ENCODE measurements at regions of chr17 and their contacts with region 1.

Region 1: GRCh38 chr17:45148183-45149036 is at the start of gene HEXIM1:
- DNase-seq: peak; percentile 99
- H3K4me3 Mint-ChIP-seq: peak within 1 kb of the TSS; percentile 96
- H3K27ac Mint-ChIP-seq: peak within 1 kb of the TSS; percentile 98
- H3K4me1 Mint-ChIP-seq: peaks cover 26% of the 10 kb centered on the region
- H3K27me3 Mint-ChIP-seq: no peaks in the 10 kb centered on the region
- total RNA-seq, gene HEXIM1: 65.9 and 67.9 TPM in 2 replicates

Region 2: GRCh38 chr17:44689477-44690217 is 458.8 kb before region 1 on chr17 and contains the start of gene CCDC43:
- intact Hi-C with region 1: loop called (anchors 1 kb)
- DNase-seq: peak; percentile 91
- H3K4me3 Mint-ChIP-seq: peak within 1 kb of the TSS; percentile 99
- H3K27ac Mint-ChIP-seq: peak within 1 kb of the TSS; percentile 89
- H3K4me1 Mint-ChIP-seq: peaks cover 32% of the 10 kb centered on the region
- H3K27me3 Mint-ChIP-seq: no peaks in the 10 kb centered on the region
- total RNA-seq, gene CCDC43: 42.6 and 44.6 TPM in 2 replicates

Region 3: GRCh38 chr17:45161019-45161825 is 12.8 kb after region 1 on chr17:
- intact Hi-C with region 1: loop called (anchors 1 kb)
- DNase-seq: peak; percentile 98
- H3K4me3 Mint-ChIP-seq: peak overlapping the region; percentile 98
- H3K27ac Mint-ChIP-seq: peak overlapping the region; percentile 98
- H3K4me1 Mint-ChIP-seq: peaks cover 32% of the 10 kb centered on the region
- H3K27me3 Mint-ChIP-seq: no peaks in the 10 kb centered on the region

Region 4: DNA sequence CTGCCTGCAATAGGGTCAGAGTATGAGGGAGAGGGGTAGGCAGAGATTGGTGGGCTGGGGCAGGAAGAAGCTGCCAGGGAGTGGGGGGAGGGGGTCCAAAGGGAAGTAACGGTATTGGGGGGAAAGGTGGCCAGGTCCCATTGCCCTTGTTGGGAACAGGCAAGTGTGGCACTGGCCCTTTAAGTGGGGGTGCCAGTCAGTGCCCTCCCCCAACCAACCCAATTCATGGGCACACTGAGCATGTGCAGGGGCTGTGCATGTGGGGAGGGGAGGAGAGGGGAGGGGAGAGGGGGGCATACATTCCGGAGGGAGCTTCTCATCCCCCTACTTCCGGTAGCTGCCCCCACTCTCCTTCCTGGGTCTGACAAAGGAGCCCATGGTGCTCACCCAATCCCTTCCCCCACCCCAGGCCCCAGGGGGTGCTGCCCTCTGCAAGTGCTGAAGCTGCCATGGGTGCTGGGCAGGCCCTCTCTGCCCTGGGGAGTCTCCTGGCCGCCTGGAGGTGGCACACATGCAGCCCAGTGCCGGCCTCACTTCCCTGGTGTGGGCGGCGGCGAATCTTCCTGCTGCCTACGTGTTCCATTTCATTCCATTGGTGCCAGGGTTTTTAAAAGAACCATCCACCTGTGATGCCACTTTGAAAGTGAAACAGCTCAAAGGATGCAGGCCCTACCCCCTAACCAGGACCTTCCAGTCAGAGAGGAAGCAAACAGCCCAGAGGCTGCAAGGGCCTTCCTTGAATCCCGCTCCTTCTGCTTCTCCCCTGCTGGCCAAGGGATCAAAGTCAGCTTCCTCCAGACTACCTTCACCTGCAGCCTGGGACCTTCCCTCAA is 24.3 kb after region 1 on chr17:
- intact Hi-C with region 1: loop called (anchors 1 kb)
- DNase-seq: peak; percentile 28
- H3K4me3 Mint-ChIP-seq: peak overlapping the region; percentile 75
- H3K27ac Mint-ChIP-seq: peak overlapping the region; percentile 94
- H3K4me1 Mint-ChIP-seq: peaks cover 22% of the 10 kb centered on the region
- H3K27me3 Mint-ChIP-seq: no peaks in the 10 kb centered on the region

Region 5: DNA sequence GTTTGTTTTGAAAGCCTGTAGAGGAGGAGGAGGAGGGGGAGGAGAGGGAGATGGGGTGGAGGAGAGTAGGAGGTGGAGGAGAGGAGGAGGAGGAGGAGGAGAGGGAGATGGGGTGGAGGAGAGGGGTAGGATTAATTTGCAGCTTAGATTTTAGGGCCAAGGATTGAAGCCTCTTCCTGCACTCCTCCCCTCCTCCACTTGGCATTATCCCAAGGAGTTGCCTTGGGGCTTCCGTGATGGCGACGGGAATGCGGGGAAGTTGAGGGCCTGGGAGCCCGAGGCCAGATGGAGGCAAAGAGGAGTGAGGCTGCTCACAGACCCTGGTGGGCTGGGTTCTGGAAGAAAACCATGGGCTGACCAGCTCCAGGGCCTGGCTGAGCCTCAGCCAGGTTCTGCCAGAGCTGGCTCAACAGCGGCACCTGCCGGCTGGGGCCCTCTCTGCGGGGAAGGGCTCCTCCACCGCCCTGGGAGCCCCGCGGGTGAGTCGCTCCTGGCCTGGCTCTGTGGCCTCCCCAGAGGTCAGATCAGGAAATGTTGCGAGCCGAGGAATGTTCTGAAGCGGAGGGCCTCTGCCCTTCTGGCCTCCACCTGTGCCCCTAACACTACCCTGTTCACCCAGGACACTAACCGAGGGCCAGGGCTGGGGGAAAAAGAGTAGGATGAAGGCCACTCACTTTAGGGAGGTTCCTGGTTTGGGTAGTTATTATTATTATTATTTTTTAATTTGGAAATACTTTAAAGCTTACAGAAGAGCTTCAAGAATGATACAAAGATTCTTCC is 49.3 kb after region 1 on chr17:
- intact Hi-C with region 1: loop called (anchors 1 kb)
- DNase-seq: peak; percentile 79
- H3K4me3 Mint-ChIP-seq: no peak overlapping the region
- H3K27ac Mint-ChIP-seq: no peak overlapping the region
- H3K4me1 Mint-ChIP-seq: no peaks in the 10 kb centered on the region
- H3K27me3 Mint-ChIP-seq: no peaks in the 10 kb centered on the region

Region 6: GRCh38 chr17:45228763-45229539 is 80.5 kb after region 1 on chr17:
- intact Hi-C with region 1: loop called (anchors 1 kb)
- DNase-seq: peak; percentile 81
- H3K4me3 Mint-ChIP-seq: peak overlapping the region; percentile 99
- H3K27ac Mint-ChIP-seq: peak overlapping the region; percentile 97
- H3K4me1 Mint-ChIP-seq: peaks cover 94% of the 10 kb centered on the region
- H3K27me3 Mint-ChIP-seq: no peaks in the 10 kb centered on the region

Region 7: DNA sequence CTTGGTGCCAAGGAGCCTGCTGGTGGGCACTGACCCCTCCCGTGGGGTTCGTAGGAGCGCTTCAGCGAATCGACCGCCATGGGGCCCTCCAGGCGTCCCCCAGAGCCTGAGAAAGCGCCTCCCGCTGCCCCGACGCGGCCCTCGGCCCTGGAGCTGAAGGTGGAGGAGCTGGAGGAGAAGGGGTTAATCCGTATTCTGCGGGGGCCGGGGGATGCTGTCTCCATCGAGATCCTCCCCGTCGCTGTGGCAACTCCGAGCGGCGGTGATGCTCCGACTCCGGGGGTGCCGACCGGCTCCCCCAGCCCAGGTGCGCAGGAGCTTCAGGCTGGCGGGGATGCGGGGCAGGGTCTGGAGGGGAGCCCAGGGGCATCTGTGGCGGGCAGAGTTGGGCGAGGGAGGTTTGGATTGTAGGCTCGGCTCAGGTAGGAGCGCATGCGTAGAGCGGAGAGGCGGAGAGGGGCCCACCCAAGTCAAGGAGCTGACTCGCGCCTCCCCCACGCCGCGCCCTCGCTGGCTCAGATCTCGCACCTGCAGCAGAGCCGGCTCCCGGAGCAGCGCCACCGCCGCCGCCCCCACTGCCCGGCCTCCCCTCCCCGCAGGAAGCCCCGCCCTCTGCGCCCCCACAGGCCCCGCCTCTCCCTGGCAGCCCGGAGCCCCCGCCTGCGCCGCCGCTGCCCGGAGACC is 93.1 kb after region 1 on chr17:
- intact Hi-C with region 1: no loop called
- DNase-seq: no peak
- H3K4me3 Mint-ChIP-seq: no peak overlapping the region
- H3K27ac Mint-ChIP-seq: no peak overlapping the region
- H3K4me1 Mint-ChIP-seq: peaks cover 38% of the 10 kb centered on the region
- H3K27me3 Mint-ChIP-seq: no peaks in the 10 kb centered on the region

Measured in activated T-helper 1 cell treated with anti-CD3 and anti-CD28 coated beads, Interleukin-12 subunit alpha, Interleukin-12 subunit beta, Interleukin-2, Interleukin-4 antibody, amounts not matched to agents 30 ng/mL and 10 ng/mL and 1 ng/mL, durations not matched to agents 14 hours and 24 hours and 36 hours (primary cell).